ENCODE measurements at regions of chr6 and their contacts with region 1.

Region 1: GRCh38 chr6:134123666-134124208 is 71.3 kb upstream of the SLC2A12 start:
- DNase-seq: peak; percentile 74 to 82 (median 80)
- H3K4me3 ChIP-seq: no peak overlapping the region
- H3K27ac ChIP-seq: no peak overlapping the region
- H3K4me1 ChIP-seq: no peaks in the 10 kb centered on the region
- H3K27me3 ChIP-seq: no peaks in the 10 kb centered on the region

Region 2: GRCh38 chr6:134074151-134075055 is 49.3 kb before region 1 on chr6:
- CTCF ChIA-PET with region 1: no interaction called
- POLR2A ChIA-PET with region 1: no interaction called
- DNase-seq: no peak
- H3K4me3 ChIP-seq: no peak overlapping the region
- H3K27ac ChIP-seq: no peak overlapping the region
- H3K4me1 ChIP-seq: peaks cover 0 to 5% (median 0%) of the 10 kb centered on the region in 4 experiments
- H3K27me3 ChIP-seq: peaks cover 0 to 3% (median 0%) of the 10 kb centered on the region in 5 experiments

Region 3: DNA sequence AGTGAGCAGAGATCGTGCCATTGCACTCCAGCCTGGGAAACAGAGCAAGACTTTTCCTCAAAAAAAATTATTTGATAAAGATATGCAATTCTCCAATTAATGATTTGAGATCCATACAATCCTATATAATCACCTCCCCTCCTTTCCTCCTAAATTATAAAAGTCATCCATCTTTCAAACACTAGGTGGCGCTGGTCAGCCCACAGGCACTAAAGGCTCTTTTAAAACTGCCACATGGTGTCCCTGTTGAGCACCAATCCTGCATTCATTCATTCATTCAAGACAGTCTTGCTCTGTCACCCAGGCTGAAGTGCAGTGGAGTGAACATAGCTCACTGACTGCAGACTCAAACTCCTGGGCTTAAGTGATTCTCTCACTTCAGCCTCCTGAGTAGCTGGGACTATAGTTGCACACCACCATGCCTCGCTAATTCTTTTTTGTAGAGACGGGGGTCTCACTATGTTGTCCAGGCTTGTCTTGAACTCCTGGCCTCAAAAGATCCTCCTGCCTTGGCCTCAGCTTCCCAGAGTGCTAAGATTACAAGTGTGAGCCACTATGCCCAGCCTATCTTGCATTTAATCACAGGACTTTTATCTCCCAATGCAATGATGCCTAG is 12.6 kb before region 1 on chr6:
- CTCF ChIA-PET with region 1: interaction called, 16 read pairs
- POLR2A ChIA-PET with region 1: no interaction called
- DNase-seq: peak; percentile 74 to 87 (median 85)
- H3K4me3 ChIP-seq: no peak overlapping the region
- H3K27ac ChIP-seq: no peak overlapping the region
- H3K4me1 ChIP-seq: peaks cover 0 to 2% (median 0%) of the 10 kb centered on the region in 4 experiments
- H3K27me3 ChIP-seq: peaks cover 0 to 14% (median 9%) of the 10 kb centered on the region in 5 experiments

Measured in common myeloid progenitor, CD34-positive (primary cell).